ENCODE measurements at regions of chr14 and their contacts with region 1.

Region 1: DNA sequence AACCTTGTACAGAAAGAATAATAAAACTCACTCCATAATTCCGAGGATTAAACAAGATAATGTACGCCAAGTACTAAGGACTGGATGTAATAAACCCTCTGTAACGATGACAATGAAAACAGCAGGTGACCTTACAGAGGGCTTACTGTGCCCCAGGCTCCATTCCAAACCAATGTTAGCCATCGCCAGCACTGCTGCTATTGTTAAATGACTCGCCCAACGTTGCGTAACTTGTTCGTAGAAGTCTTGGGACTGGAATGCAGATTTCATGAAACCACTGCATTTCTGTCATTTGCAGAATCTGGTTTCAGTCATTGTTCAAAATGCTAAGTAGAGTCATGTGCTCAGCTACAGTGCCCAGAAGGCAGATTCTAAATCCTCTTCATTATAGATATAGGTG is 728 bp upstream of the STON2 start:
- H3K4me3 Mint-ChIP-seq: no peak overlapping the region
- H3K27ac Mint-ChIP-seq: peak overlapping the region; percentile 88
- H3K4me1 Mint-ChIP-seq: peaks cover 47% of the 10 kb centered on the region
- H3K27me3 Mint-ChIP-seq: peaks cover 60% of the 10 kb centered on the region

Region 2: DNA sequence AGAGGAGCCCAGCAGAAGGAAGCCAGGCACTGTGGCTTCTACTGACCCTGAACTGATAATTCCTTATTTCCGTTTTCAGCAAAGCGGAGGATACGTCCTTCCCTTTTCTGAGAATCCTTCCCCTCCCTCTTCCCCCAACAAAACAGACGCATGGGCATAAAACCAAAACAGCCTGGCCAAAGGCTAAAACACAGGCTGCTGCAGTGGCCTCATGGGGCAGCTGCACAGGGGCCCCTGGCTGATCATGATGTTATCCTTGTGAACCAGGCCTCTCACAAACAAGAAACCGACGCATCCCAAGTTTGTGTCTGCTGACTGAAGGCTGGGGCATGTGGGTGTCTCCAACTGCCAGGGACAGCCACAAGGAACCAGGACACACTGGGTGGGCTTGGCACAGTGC is 22.7 kb after region 1 on chr14:
- intact Hi-C with region 1: loop called (anchors 2 kb)
- H3K4me3 Mint-ChIP-seq: no peak overlapping the region
- H3K27ac Mint-ChIP-seq: peak overlapping the region; percentile 80
- H3K4me1 Mint-ChIP-seq: peaks cover 75% of the 10 kb centered on the region
- H3K27me3 Mint-ChIP-seq: peaks cover 38% of the 10 kb centered on the region

Region 3: GRCh38 chr14:81516986-81517797 is 116.3 kb after region 1 on chr14:
- intact Hi-C with region 1: no loop called
- H3K4me3 Mint-ChIP-seq: no peak overlapping the region
- H3K27ac Mint-ChIP-seq: no peak overlapping the region
- H3K4me1 Mint-ChIP-seq: peaks cover 30% of the 10 kb centered on the region
- H3K27me3 Mint-ChIP-seq: no peaks in the 10 kb centered on the region

Measured in dendritic cell treated with granulocyte-macrophage colony-stimulating factor and Interleukin-4, amounts not matched to agents 40 ng/mL and 50 ng/mL, for 4 days (primary cell).